B cell (primary cell): ENCODE measurements at regions of chr1 and their contacts with region 1.

Region 1: GRCh38 chr1:93345633-93346420 is at the start of gene DR1:
- DNase-seq: peak; percentile 93
- ATAC-seq: peak; percentile 84
- H3K4me3 ChIP-seq: peak within 1 kb of the TSS; percentile 78 to 94 (median 91)
- H3K4me3 Mint-ChIP-seq: peak within 1 kb of the TSS; percentile 95
- H3K27ac ChIP-seq: peak within 1 kb of the TSS; percentile 81 to 95
- H3K27ac Mint-ChIP-seq: peak within 1 kb of the TSS; percentile 98
- H3K4me1 ChIP-seq: peaks cover 12 to 40% of the 10 kb centered on the region in 2 donors
- H3K4me1 Mint-ChIP-seq: peaks cover 50% of the 10 kb centered on the region
- H3K27me3 ChIP-seq: no peaks in the 10 kb centered on the region
- H3K27me3 Mint-ChIP-seq: no peaks in the 10 kb centered on the region
- CTCF ChIP-seq: no peak
- total RNA-seq, gene DR1: 65.6 and 69.2 TPM in 2 replicates

Region 2: DNA sequence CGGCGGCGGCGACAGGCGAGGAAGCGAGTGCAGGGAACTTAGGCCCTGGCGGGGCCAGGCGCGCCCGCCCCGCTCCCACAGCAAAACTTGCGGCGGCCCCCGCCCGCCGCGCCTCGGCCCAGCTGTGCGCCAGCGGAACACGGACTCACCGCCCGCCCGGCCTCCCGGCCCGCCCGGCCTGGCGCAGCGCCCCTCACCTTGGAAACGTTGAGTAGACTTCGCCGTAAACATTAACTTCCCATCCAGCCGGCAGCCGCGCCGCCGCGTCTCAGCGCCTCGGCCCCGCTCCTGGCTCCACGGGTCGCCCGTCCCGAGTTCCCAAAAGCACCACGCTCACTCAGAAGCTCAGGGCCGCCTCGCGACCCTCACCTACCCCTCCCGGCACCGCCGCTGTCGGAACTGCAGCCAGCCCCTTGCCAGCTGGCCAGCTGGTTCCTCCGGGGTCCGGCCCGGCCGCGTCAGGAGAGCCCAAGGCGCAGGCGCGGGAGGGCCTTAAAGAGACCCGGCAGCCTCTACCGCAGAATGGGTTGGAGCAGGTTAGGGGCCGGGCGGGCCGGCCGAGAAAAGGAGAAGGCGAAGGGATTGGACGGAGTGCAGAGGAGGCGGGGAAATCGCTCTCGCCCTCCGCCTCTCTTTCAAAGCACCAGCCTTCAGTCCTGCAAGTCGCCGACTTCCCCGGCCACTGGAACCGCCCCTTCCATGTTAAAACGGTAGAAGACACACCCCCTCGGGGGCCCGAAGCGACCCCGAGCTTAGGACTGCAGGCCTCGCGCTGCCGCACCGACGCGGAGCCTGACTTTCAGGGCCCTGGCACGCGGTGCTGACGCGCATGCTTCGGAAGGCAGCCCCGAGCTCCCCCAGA is 561.0 kb before region 1 on chr1 and contains the start of gene EVI5:
- CTCF ChIA-PET with region 1: no interaction called
- POLR2A ChIA-PET with region 1: no interaction called
- intact Hi-C with region 1: loop called (anchors 5 kb)
- DNase-seq: peak; percentile 95
- ATAC-seq: peak; percentile 89
- H3K4me3 ChIP-seq: peak within 1 kb of the TSS; percentile 54 to 87 (median 71)
- H3K4me3 Mint-ChIP-seq: peak within 1 kb of the TSS; percentile 94
- H3K27ac ChIP-seq: peak within 1 kb of the TSS; percentile 80 to 94
- H3K27ac Mint-ChIP-seq: peak within 1 kb of the TSS; percentile 95
- H3K4me1 ChIP-seq: peaks cover 7 to 17% of the 10 kb centered on the region in 2 donors
- H3K4me1 Mint-ChIP-seq: peaks cover 26% of the 10 kb centered on the region
- H3K27me3 ChIP-seq: no peaks in the 10 kb centered on the region
- H3K27me3 Mint-ChIP-seq: no peaks in the 10 kb centered on the region
- CTCF ChIP-seq: no peak
- total RNA-seq, gene EVI5: 35.4 and 36.3 TPM in 2 replicates

Region 3: DNA sequence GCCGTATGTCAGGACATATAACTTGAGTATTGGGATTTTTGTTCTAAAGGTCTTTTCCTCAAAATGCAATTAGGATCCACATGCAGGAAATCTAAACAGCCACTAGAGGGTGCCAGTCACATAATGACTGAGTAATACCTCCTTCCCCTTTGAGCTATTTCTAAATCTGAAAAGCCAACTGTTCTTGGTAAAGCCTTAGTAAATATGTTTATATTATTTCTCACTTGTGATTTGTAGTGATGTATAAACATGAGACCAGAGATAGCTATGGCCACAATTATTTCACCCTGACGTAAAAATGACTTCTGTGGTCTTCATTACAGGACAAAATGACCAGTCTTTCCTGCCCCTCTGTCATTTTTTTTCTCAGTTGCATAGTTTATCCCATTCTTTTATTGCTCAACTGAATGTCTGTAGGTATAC is 41.1 kb before region 1 on chr1:
- CTCF ChIA-PET with region 1: interaction called, 12 read pairs
- POLR2A ChIA-PET with region 1: no interaction called
- intact Hi-C with region 1: no loop called
- DNase-seq: peak; percentile 73
- ATAC-seq: peak; percentile 53
- H3K4me3 ChIP-seq: no peak overlapping the region
- H3K4me3 Mint-ChIP-seq: no peak overlapping the region
- H3K27ac ChIP-seq: no peak overlapping the region
- H3K27ac Mint-ChIP-seq: no peak overlapping the region
- H3K4me1 ChIP-seq: no peaks in the 10 kb centered on the region
- H3K4me1 Mint-ChIP-seq: no peaks in the 10 kb centered on the region
- H3K27me3 ChIP-seq: no peaks in the 10 kb centered on the region
- H3K27me3 Mint-ChIP-seq: no peaks in the 10 kb centered on the region
- CTCF ChIP-seq: peak; percentile 88

Region 4: GRCh38 chr1:93528412-93528811 is 182.6 kb after region 1 on chr1:
- CTCF ChIA-PET with region 1: no interaction called
- POLR2A ChIA-PET with region 1: no interaction called
- intact Hi-C with region 1: no loop called
- DNase-seq: peak; percentile 9
- ATAC-seq: no peak
- H3K4me3 ChIP-seq: no peak overlapping the region
- H3K4me3 Mint-ChIP-seq: no peak overlapping the region
- H3K27ac ChIP-seq: no peak overlapping the region
- H3K27ac Mint-ChIP-seq: no peak overlapping the region
- H3K4me1 ChIP-seq: no peaks in the 10 kb centered on the region
- H3K4me1 Mint-ChIP-seq: no peaks in the 10 kb centered on the region
- H3K27me3 ChIP-seq: no peaks in the 10 kb centered on the region
- H3K27me3 Mint-ChIP-seq: no peaks in the 10 kb centered on the region
- CTCF ChIP-seq: no peak

Region 5: GRCh38 chr1:93878889-93879586 is 533.2 kb after region 1 on chr1 and contains the start of gene DNTTIP2:
- CTCF ChIA-PET with region 1: no interaction called
- POLR2A ChIA-PET with region 1: no interaction called
- intact Hi-C with region 1: loop called (anchors 1 kb)
- DNase-seq: peak; percentile 91
- ATAC-seq: peak; percentile 89
- H3K4me3 ChIP-seq: peak within 1 kb of the TSS; percentile 82 to 99 (median 96)
- H3K4me3 Mint-ChIP-seq: peak within 1 kb of the TSS; percentile 98
- H3K27ac ChIP-seq: peak within 1 kb of the TSS; percentile 89 to 94
- H3K27ac Mint-ChIP-seq: peak within 1 kb of the TSS; percentile 100
- H3K4me1 ChIP-seq: peaks cover 26 to 30% of the 10 kb centered on the region in 2 donors
- H3K4me1 Mint-ChIP-seq: peaks cover 42% of the 10 kb centered on the region
- H3K27me3 ChIP-seq: no peaks in the 10 kb centered on the region
- H3K27me3 Mint-ChIP-seq: no peaks in the 10 kb centered on the region
- CTCF ChIP-seq: no peak
- total RNA-seq, gene DNTTIP2: 58.3 and 62.1 TPM in 2 replicates

Region 6: DNA sequence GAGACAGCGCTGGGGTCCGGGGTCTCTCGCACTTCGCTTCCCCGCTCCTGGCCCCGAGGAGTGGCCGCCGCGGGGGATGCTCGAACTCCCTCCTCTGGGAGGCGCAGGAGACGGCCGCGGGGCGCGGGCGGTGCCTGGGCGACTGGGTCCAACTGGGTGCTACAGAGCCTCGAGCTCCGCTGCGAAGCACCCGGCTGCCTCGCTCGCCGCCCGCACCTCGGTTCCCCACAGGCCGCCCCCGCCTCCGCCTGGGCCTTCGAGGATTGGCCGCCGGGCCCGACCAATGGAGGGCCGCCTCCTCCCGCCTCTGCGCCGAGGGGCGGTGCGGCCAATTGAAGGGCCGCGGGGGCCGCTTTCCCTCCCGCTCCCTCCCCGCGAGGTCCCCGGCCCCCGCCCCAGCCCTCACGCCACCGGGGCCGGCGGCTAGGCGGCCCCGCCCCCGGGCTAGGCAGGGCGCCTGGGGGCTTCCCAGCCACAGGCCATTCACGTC is 1581.1 kb after region 1 on chr1 and contains the start of gene CNN3:
- CTCF ChIA-PET with region 1: no interaction called
- POLR2A ChIA-PET with region 1: no interaction called
- intact Hi-C with region 1: loop called (anchors 5 kb)
- DNase-seq: peak; percentile 86
- ATAC-seq: peak; percentile 85
- H3K4me3 ChIP-seq: peak within 1 kb of the TSS; percentile 56 to 67 (median 61)
- H3K4me3 Mint-ChIP-seq: peak within 1 kb of the TSS; percentile 95
- H3K27ac ChIP-seq: peak within 1 kb of the TSS in 1 of 2 donors; percentile 82
- H3K27ac Mint-ChIP-seq: peak within 1 kb of the TSS; percentile 80
- H3K4me1 ChIP-seq: peaks cover 24 to 28% of the 10 kb centered on the region in 2 donors
- H3K4me1 Mint-ChIP-seq: peaks cover 26% of the 10 kb centered on the region
- H3K27me3 ChIP-seq: peaks cover 0 to 30% (median 9%) of the 10 kb centered on the region in 4 experiments
- H3K27me3 Mint-ChIP-seq: peaks cover 27% of the 10 kb centered on the region
- CTCF ChIP-seq: no peak
- total RNA-seq, gene CNN3: 17.2 and 21.1 TPM in 2 replicates